T-cell (primary cell): ENCODE measurements at regions of chr19 and their contacts with region 1.

Region 1: DNA sequence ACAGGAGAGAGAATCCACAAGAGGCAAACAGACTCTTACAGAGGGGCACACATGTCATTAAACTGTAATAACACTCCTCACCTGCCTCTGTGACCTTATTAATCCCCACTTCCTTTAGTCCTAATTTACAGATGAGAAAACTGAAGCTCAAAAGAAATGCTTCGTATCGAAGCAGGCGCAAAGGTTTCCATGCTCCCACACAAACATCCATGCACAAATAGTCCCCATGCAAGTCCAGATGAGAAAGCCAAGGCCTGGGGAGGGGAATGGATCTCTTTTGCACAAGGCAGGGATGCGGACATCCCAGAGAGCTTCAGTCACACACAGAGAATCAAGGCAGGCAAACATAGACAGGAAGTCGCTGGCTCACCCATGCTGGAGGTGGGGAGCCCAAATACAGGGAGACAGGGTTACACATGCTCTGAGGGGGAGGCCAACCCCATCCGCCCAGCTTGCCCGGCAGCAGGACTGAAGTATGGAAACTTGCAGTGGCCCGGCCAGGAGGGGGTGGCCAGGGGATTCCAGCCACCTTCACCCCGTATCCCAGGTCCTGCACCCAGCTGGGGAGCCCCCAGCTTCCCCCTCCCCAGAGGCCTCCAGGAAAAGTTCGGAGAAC is 468 bp downstream of the S1PR5 start:
- DNase-seq: peak in 3 of 35 experiments; percentile 8 to 51 (median 26)
- ATAC-seq: no peak
- H3K4me3 ChIP-seq: peak overlapping the region; percentile 56 to 67
- H3K4me3 Mint-ChIP-seq: peak overlapping the region; percentile 66 to 72 (median 70)
- H3K27ac ChIP-seq: peak overlapping the region; percentile 80
- H3K27ac Mint-ChIP-seq: peak overlapping the region in 1 of 2 donors; percentile 47
- H3K4me1 ChIP-seq: peaks cover 17 to 85% of the 10 kb centered on the region in 2 experiments
- H3K4me1 Mint-ChIP-seq: peaks cover 25 to 38% (median 30%) of the 10 kb centered on the region in 3 donors
- H3K27me3 ChIP-seq: peaks cover 14 to 87% of the 10 kb centered on the region in 2 experiments
- H3K27me3 Mint-ChIP-seq: peaks cover 48 to 61% of the 10 kb centered on the region in 2 donors

Region 2: GRCh38 chr19:10543420-10544241 is 26.9 kb after region 1 on chr19 and contains the start of gene ATG4D:
- CTCF ChIA-PET with region 1: no interaction called
- POLR2A ChIA-PET with region 1: interaction called in 1 of 2 experiments, 10 read pairs
- DNase-seq: peak; percentile 62 to 89 (median 77)
- ATAC-seq: peak; percentile 86 to 91 (median 87)
- H3K4me3 ChIP-seq: peak within 1 kb of the TSS; percentile 71 to 91
- H3K4me3 Mint-ChIP-seq: peak within 1 kb of the TSS; percentile 84 to 89 (median 84)
- H3K27ac ChIP-seq: peak within 1 kb of the TSS; percentile 58
- H3K27ac Mint-ChIP-seq: peak within 1 kb of the TSS; percentile 87 to 89
- H3K4me1 ChIP-seq: peaks cover 4 to 32% of the 10 kb centered on the region in 2 experiments
- H3K4me1 Mint-ChIP-seq: peaks cover 12 to 17% (median 16%) of the 10 kb centered on the region in 3 donors
- H3K27me3 ChIP-seq: peaks cover 0 to 20% of the 10 kb centered on the region in 2 experiments
- H3K27me3 Mint-ChIP-seq: peaks cover 9 to 13% of the 10 kb centered on the region in 2 donors
- total RNA-seq, gene ATG4D: 55.7 to 63.0 (median 60.9) TPM

Region 3: DNA sequence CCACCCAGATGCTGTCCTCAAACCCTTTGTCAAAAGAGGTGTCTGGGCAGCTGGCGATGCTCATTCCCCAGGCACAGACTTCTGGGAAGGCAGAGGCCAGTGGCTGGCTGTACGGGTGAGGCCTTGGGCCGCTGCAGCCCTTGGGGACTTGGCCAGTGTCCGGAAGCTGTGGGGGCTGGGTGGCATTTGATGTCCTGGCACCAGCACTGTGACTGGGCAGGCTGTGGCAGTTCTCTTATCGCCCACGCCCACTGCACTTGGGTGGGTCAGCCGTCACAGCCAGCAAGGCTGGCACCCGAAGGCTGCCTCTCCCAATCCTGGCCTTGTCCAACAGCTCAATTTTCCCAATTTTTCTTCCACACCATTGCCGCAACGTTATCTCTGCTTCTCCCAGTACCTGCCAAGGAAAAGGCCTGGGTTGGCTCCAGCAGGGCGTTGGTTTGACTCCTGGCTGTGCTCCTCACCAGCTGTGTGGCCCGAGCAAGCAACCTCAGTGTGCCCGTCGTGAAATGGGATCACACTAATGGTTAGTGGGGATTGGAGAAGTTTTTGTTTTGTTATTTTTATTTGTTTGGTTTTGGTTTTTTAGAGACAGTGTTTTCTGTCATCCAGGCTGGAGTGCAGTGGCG is 95.8 kb after region 1 on chr19:
- CTCF ChIA-PET with region 1: no interaction called
- POLR2A ChIA-PET with region 1: no interaction called
- DNase-seq: no peak
- ATAC-seq: no peak
- H3K4me3 ChIP-seq: no peak overlapping the region
- H3K4me3 Mint-ChIP-seq: peak overlapping the region in 1 of 3 donors; percentile 43
- H3K27ac ChIP-seq: no peak overlapping the region
- H3K27ac Mint-ChIP-seq: peak overlapping the region; percentile 31 to 44
- H3K4me1 ChIP-seq: peaks cover 3 to 69% of the 10 kb centered on the region in 2 experiments
- H3K4me1 Mint-ChIP-seq: peaks cover 42 to 49% (median 45%) of the 10 kb centered on the region in 3 donors
- H3K27me3 ChIP-seq: no peaks in the 10 kb centered on the region
- H3K27me3 Mint-ChIP-seq: no peaks in the 10 kb centered on the region

Region 4: DNA sequence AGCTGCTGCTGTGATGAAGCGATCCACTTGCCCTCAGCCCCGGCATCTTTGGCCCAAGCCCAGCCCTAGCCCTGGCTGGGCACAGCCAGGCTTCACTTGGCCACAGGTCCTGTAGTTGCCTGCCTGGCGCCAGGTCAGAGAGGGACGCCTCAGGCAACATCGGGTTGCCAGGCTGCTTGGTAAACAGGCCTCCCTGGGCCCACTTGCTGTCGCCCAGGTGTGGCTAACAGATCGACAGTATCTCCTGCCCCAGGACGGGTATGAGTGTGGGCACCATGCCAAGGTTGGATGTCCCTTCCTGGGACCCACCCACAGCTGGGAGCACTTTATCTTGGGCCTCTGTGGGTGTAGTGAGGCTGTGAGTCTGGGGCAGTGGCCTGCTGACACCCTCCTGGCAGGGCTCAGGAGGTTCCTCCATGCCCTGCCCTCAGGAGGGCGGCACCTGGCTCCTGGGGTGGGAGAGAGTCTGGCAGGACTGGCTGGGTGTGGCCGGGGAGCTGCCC is 382.4 kb after region 1 on chr19:
- CTCF ChIA-PET with region 1: no interaction called
- POLR2A ChIA-PET with region 1: no interaction called
- DNase-seq: no peak
- ATAC-seq: no peak
- H3K4me3 ChIP-seq: no peak overlapping the region
- H3K4me3 Mint-ChIP-seq: no peak overlapping the region
- H3K27ac ChIP-seq: no peak overlapping the region
- H3K27ac Mint-ChIP-seq: no peak overlapping the region
- H3K4me1 ChIP-seq: peaks cover 4 to 15% of the 10 kb centered on the region in 2 experiments
- H3K4me1 Mint-ChIP-seq: peaks cover 11 to 21% (median 15%) of the 10 kb centered on the region in 3 donors
- H3K27me3 ChIP-seq: no peaks in the 10 kb centered on the region
- H3K27me3 Mint-ChIP-seq: no peaks in the 10 kb centered on the region